ENCODE measurements at regions of chr5 and their contacts with region 1.

Region 1: DNA sequence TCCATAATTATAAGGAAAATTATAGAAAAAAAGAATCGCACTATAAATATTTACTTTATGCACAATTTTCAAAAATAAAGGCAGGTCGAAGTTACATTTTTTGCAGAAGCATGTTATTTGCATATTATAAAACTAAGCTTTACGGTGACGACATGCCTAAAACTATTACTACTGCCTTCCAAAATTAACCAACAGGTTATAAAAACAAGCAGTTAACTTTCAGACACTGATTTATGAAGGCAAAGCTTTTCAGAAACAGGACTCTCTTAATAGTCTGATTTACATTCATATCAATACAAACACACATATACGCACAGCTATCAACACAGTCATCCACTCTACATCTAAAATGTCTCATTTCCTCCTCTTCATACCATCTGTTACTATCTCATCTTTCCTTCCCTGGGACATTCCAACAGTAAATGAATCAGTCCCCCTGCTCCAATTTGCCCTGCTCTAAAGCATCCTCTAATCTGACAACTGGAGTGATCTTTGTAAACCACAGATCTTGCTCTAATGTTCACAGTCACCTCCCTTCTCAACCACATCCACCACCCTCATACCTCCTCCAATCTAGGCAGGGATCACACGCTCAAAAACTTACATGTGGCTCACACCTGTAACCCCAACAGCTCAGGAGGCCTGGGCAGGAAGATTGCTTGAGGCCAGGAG is 21.6 kb downstream of the FBXW11 start:
- DNase-seq: peak; percentile 69
- H3K4me3 Mint-ChIP-seq: no peak overlapping the region
- H3K27ac Mint-ChIP-seq: peak overlapping the region; percentile 52
- H3K4me1 Mint-ChIP-seq: peaks cover 54% of the 10 kb centered on the region
- H3K27me3 Mint-ChIP-seq: no peaks in the 10 kb centered on the region

Region 2: DNA sequence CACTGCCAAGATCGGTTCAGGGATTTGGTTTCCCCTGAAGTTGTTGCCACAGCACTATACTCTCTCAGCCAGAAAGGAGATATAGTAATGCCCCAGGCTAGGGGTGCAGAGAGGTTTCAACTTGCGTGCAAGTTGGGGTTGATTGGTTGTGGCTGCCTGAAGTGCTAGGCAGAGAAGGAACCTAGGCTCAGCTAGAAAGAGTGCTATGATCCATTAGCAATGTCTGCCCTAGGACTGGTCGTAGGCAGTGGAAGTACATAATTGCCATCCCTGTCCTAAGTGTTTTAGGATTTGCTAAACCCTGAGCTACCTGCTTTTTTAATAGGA is 335.8 kb before region 1 on chr5:
- CTCF ChIA-PET with region 1: no interaction called
- POLR2A ChIA-PET with region 1: no interaction called
- intact Hi-C with region 1: no loop called
- DNase-seq: no peak
- H3K4me3 Mint-ChIP-seq: no peak overlapping the region
- H3K27ac Mint-ChIP-seq: no peak overlapping the region
- H3K4me1 Mint-ChIP-seq: no peaks in the 10 kb centered on the region
- H3K27me3 Mint-ChIP-seq: peaks cover 2% of the 10 kb centered on the region

Region 3: DNA sequence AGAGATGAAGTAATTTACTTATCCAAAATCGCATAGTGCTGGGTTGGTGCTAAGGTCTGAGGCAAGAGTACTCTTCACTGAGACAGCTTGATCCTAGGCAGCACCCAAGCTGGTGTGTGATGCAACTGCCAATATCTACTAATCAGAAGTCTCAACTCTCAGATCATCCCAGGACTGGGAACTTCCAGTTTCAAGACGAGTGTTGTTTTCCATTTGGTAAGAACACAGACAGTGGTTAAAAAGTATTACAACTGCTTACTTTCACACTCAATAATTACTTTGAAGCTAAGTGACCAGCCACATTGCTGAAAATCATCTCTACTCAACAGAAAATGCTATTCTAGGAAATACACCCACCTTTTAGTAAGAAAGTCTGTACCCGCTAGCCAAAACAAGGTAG is 23.8 kb before region 1 on chr5:
- CTCF ChIA-PET with region 1: interaction called, 8 read pairs
- POLR2A ChIA-PET with region 1: interaction called, 10 read pairs
- intact Hi-C with region 1: loop called (anchors 1 kb)
- DNase-seq: peak; percentile 59
- H3K4me3 Mint-ChIP-seq: no peak overlapping the region
- H3K27ac Mint-ChIP-seq: peak overlapping the region; percentile 53
- H3K4me1 Mint-ChIP-seq: peaks cover 87% of the 10 kb centered on the region
- H3K27me3 Mint-ChIP-seq: no peaks in the 10 kb centered on the region

Region 4: GRCh38 chr5:171999877-172000276 is 15.0 kb after region 1 on chr5:
- CTCF ChIA-PET with region 1: interaction called, 6 read pairs
- POLR2A ChIA-PET with region 1: interaction called, 14 read pairs
- intact Hi-C with region 1: loop called (anchors 1 kb)
- DNase-seq: no peak
- H3K4me3 Mint-ChIP-seq: no peak overlapping the region
- H3K27ac Mint-ChIP-seq: no peak overlapping the region
- H3K4me1 Mint-ChIP-seq: peaks cover 67% of the 10 kb centered on the region
- H3K27me3 Mint-ChIP-seq: no peaks in the 10 kb centered on the region